H1 (cell line): ENCODE measurements at regions of chr1 and their contacts with region 1.

Region 1: GRCh38 chr1:169546087-169546995 is 39.9 kb downstream of the F5 start:
- DNase-seq: no peak
- H3K4me3 ChIP-seq: no peak overlapping the region
- H3K27ac ChIP-seq: no peak overlapping the region
- H3K4me1 ChIP-seq: no peaks in the 10 kb centered on the region
- H3K27me3 ChIP-seq: no peaks in the 10 kb centered on the region
- CTCF ChIP-seq: peak in 2 of 3 experiments; percentile 67 to 76; a peak in 3 of 4 replicates
- EP300 ChIP-seq: no peak
- POLR2A ChIP-seq: no peak
- RAD21 ChIP-seq: peak; percentile 82 to 86

Region 2: DNA sequence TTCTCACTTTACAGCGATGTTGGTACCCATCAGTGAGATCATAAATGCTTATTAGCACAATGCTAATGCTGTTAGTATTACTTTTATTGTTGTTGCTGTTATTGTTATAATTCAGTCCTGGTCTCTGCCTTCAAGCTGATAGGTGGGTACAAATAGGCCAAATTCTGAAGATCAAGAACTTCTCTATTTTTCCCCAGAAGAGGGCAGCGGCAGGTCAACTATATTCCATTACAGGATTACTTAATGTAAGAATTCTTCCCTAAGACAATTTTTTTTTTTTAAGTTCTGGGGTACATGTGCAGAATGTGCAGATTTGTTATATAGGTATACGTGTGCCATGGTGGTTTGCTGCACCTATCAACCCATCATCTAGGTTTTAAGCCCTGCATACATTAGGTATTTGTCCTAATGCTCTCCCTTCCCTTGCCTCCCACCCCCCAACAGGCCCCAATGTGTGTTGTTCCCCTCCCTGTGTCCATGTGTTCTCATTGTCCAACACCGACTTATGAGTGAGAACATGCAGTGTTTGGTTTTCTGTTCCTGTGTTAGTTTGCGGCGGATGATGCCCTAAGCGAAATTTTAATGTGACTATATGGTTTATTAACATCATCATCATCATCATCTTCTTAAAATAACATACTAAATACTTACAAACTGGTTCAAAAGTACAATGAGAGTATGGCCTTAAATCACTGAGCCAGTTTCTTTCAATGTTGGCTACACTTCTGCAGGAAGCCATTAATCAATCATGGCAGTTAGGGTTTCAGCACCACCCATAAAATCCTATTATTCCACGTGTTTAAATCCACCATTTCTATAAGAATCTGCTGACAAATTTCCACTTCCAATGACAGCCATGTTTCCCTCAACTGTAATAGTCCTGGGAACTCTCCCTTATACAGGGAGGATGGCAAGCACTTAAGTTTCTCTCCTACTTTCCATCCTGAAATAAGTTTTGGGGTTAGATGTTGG is 79.8 kb before region 1 on chr1:
- CTCF ChIA-PET with region 1: interaction called, 37 read pairs
- POLR2A ChIA-PET with region 1: no interaction called
- DNase-seq: no peak
- H3K4me3 ChIP-seq: no peak overlapping the region
- H3K27ac ChIP-seq: no peak overlapping the region
- H3K4me1 ChIP-seq: no peaks in the 10 kb centered on the region
- H3K27me3 ChIP-seq: no peaks in the 10 kb centered on the region
- CTCF ChIP-seq: peak in 2 of 3 experiments; percentile 14 to 34; a peak in 2 of 4 replicates
- EP300 ChIP-seq: no peak
- POLR2A ChIP-seq: no peak
- RAD21 ChIP-seq: peak; percentile 54 to 65

Region 3: DNA sequence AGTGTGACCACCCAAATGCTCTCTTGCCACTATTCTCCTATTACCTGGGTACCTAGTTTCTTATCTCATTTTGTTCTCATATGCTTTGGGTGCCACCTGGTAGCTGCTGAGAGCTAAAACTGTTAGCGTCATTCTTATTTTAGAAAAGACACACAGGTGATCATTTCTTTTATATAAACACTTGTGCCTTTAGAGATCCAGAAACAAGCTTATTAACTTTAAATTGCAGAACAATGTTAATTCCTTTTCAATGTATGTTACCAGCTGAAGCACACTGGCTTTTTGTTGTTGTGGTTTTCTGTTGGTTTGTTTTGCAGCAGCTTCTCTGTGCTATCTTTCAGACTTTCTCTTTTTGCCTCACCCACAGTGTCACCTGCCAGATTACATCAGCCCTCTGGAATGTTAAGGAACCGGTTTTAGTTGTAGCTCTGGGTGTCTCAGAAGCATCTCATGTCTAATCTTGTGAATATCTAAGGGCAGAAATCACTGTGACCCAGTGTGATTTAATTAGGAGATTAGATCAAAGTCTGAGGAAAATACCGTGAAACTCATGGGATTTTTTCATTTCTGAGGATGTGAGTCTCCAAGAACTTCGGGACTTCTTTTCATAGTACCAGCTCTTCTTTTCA is 17.2 kb before region 1 on chr1:
- CTCF ChIA-PET with region 1: interaction called, 36 read pairs
- POLR2A ChIA-PET with region 1: interaction called, 5 read pairs
- DNase-seq: peak; percentile 23 to 52
- H3K4me3 ChIP-seq: peak overlapping the region in 1 of 4 experiments; percentile 40; a peak in 2 of 8 replicates
- H3K27ac ChIP-seq: peak overlapping the region; percentile 42
- H3K4me1 ChIP-seq: peaks cover 3 to 18% (median 10%) of the 10 kb centered on the region in 4 experiments; a peak in 6 of 7 replicates
- H3K27me3 ChIP-seq: no peaks in the 10 kb centered on the region
- CTCF ChIP-seq: no peak
- EP300 ChIP-seq: peak in 1 of 2 experiments; percentile 89; a peak in 2 of 3 replicates
- POLR2A ChIP-seq: no peak
- RAD21 ChIP-seq: no peak

Region 4: GRCh38 chr1:169534653-169535052 is 11.7 kb before region 1 on chr1:
- CTCF ChIA-PET with region 1: interaction called, 36 read pairs
- POLR2A ChIA-PET with region 1: interaction called, 5 read pairs
- DNase-seq: no peak
- H3K4me3 ChIP-seq: no peak overlapping the region
- H3K27ac ChIP-seq: no peak overlapping the region
- H3K4me1 ChIP-seq: peaks cover 0 to 4% (median under 1%) of the 10 kb centered on the region in 4 experiments; a peak in 2 of 7 replicates
- H3K27me3 ChIP-seq: no peaks in the 10 kb centered on the region
- CTCF ChIP-seq: no peak
- EP300 ChIP-seq: no peak
- POLR2A ChIP-seq: no peak
- RAD21 ChIP-seq: no peak

Region 5: GRCh38 chr1:169711469-169712281 is 165.3 kb after region 1 on chr1 and contains the start of gene SELL:
- CTCF ChIA-PET with region 1: interaction called, 13 read pairs
- POLR2A ChIA-PET with region 1: no interaction called
- DNase-seq: peak; percentile 15 to 65
- H3K4me3 ChIP-seq: peak within 1 kb of the TSS in 1 of 4 experiments; percentile 40; a peak in 2 of 8 replicates
- H3K27ac ChIP-seq: no peak within 1 kb of the TSS
- H3K4me1 ChIP-seq: peaks cover 0 to 2% (median 0%) of the 10 kb centered on the region in 4 experiments; a peak in 1 of 7 replicates
- H3K27me3 ChIP-seq: no peaks in the 10 kb centered on the region
- CTCF ChIP-seq: peak; percentile 71 to 86 (median 86)
- EP300 ChIP-seq: no peak
- POLR2A ChIP-seq: no peak
- RAD21 ChIP-seq: peak; percentile 88 to 93
- total RNA-seq, gene SELL: not detected in 2 replicates

Region 6: GRCh38 chr1:169809370-169810095 is 263.2 kb after region 1 on chr1:
- CTCF ChIA-PET with region 1: interaction called, 10 read pairs
- POLR2A ChIA-PET with region 1: interaction called, 4 read pairs
- DNase-seq: no peak
- H3K4me3 ChIP-seq: no peak overlapping the region
- H3K27ac ChIP-seq: no peak overlapping the region
- H3K4me1 ChIP-seq: no peaks in the 10 kb centered on the region
- H3K27me3 ChIP-seq: no peaks in the 10 kb centered on the region
- CTCF ChIP-seq: peak in 2 of 3 experiments; percentile 10 to 35; a peak in 2 of 4 replicates
- EP300 ChIP-seq: no peak
- POLR2A ChIP-seq: no peak
- RAD21 ChIP-seq: peak; percentile 58 to 62